Heart left ventricle (tissue), 16 donors: ENCODE measurements at regions of chr5 and their contacts with region 1.

Region 1: GRCh38 chr5:43008369-43009153 is 31.6 kb downstream of the ANXA2R start:
- DNase-seq: peak; percentile 87 to 93 (median 89)
- ATAC-seq: peak; percentile 83 to 90 (median 88)
- H3K4me3 ChIP-seq: peak overlapping the region; percentile 22 to 71 (median 56)
- H3K27ac ChIP-seq: peak overlapping the region; percentile 68 to 98 (median 92)
- H3K4me1 ChIP-seq: peaks cover 0 to 27% (median 4%) of the 10 kb centered on the region in 12 donors
- H3K27me3 ChIP-seq: peaks cover 0 to 75% (median 32%) of the 10 kb centered on the region in 9 donors
- CTCF ChIP-seq: peak in 2 of 12 donors; percentile 5 to 15
- POLR2A ChIP-seq: peak in 1 of 2 donors; percentile 17

Region 2: GRCh38 chr5:42807722-42808447 is 200.7 kb before region 1 on chr5:
- intact Hi-C with region 1: no loop called
- DNase-seq: peak in 1 of 5 donors; percentile 36
- ATAC-seq: peak in 3 of 4 donors; percentile 45 to 57 (median 48)
- H3K4me3 ChIP-seq: peak overlapping the region in 9 of 12 donors; percentile 52 to 70 (median 61)
- H3K27ac ChIP-seq: peak overlapping the region in 6 of 12 donors; percentile 1 to 86 (median 27)
- H3K4me1 ChIP-seq: peaks cover 0 to 47% (median 24%) of the 10 kb centered on the region in 12 donors
- H3K27me3 ChIP-seq: no peaks in the 10 kb centered on the region
- CTCF ChIP-seq: peak in 9 of 12 donors; percentile 19 to 44 (median 31)
- POLR2A ChIP-seq: no peak

Region 3: DNA sequence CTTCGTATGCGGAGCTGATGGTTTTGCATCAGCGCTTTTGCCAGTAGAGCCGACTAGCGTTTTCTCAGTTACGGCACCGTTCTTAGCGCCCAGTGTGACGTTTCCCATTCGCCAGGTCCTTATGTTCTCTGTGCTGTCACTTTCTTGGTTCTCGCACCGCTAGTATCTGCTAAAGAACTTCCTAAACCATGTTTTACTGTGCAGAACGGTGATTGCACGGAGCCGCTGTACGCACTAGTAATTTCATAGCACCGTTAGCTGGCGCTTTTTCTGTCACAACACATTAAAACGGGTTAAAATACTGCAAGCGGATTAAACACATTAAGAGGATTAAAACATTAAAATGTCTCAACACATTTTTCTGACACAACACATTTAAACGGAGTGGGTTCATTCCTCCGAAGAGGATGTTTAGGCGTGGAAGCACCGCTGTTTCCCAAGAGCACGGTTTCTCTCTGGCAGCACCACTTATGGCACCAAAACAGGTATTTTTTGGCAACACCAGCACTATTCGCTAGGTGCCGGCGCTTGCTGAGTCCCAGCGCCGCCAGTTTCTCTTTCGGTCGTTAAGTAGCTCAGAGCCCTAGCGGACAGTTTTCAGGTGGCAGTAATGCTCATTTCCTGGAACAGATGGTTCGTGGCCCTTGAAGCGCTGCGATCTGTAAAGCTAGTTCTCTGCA is 11.2 kb after region 1 on chr5:
- intact Hi-C with region 1: loop called in 2 of 10 experiments (anchors 1 kb)
- DNase-seq: peak in 4 of 5 donors; percentile 64 to 74 (median 70)
- ATAC-seq: peak in 3 of 4 donors; percentile 45 to 51 (median 51)
- H3K4me3 ChIP-seq: peak overlapping the region; percentile 42 to 73 (median 63)
- H3K27ac ChIP-seq: peak overlapping the region; percentile 75 to 99 (median 94)
- H3K4me1 ChIP-seq: peaks cover 0 to 44% (median 9%) of the 10 kb centered on the region in 12 donors
- H3K27me3 ChIP-seq: peaks cover 0 to 94% (median 23%) of the 10 kb centered on the region in 9 donors
- CTCF ChIP-seq: peak; percentile 11 to 55 (median 36)
- POLR2A ChIP-seq: no peak

Region 4: GRCh38 chr5:43050384-43050783 is 41.8 kb after region 1 on chr5:
- intact Hi-C with region 1: no loop called
- DNase-seq: no peak
- ATAC-seq: no peak
- H3K4me3 ChIP-seq: no peak overlapping the region
- H3K27ac ChIP-seq: no peak overlapping the region
- H3K4me1 ChIP-seq: no peaks in the 10 kb centered on the region
- H3K27me3 ChIP-seq: peaks cover 0 to 1% (median 0%) of the 10 kb centered on the region in 9 donors
- CTCF ChIP-seq: no peak
- POLR2A ChIP-seq: no peak